ENCODE measurements at regions of chr15 and their contacts with region 1.

Region 1: DNA sequence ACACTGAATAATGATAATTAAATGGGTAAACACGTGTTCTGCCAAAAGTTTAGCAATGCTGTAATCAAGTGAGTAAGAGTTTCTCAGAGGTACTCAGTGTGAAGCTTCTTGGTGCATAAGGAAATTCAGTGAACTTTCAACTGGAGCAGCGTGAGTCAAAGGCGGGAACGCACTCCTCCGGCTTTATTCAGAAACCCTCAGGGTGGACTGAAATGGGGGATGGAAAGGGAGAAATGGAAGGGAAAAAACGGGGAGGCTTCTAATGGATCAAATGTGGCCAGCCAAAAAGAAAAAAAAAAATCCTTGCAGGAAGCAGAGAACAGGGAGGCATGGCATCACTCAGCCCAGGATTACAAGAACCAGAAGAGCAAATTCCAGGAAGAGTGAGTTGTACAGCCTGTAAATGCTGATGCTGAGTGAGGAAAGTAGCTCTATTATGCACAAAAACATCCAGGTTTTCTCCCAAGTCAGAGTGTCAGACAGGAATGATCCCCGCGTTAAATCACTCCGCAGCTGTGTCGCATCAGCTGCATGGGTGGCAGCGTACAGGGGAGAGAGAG is 85.3 kb downstream of the ASB7 start:
- DNase-seq: no peak
- ATAC-seq: peak; percentile 53 to 56
- H3K4me3 ChIP-seq: no peak overlapping the region
- H3K27ac ChIP-seq: peak overlapping the region; percentile 51 to 65 (median 62)
- H3K4me1 ChIP-seq: no peaks in the 10 kb centered on the region
- H3K27me3 ChIP-seq: peaks cover 0 to 3% (median 0%) of the 10 kb centered on the region in 3 donors
- CTCF ChIP-seq: no peak
- POLR2A ChIP-seq: no peak

Region 2: GRCh38 chr15:100721770-100722550 is 34.3 kb after region 1 on chr15:
- in situ Hi-C with region 1: no loop called
- intact Hi-C with region 1: loop called (anchors 5 kb)
- DNase-seq: peak; percentile 63 to 78
- ATAC-seq: peak; percentile 86 to 91
- H3K4me3 ChIP-seq: no peak overlapping the region
- H3K27ac ChIP-seq: peak overlapping the region; percentile 65 to 72 (median 68)
- H3K4me1 ChIP-seq: peaks cover 0 to 9% of the 10 kb centered on the region in 2 donors
- H3K27me3 ChIP-seq: peaks cover 0 to 6% (median 0%) of the 10 kb centered on the region in 3 donors
- CTCF ChIP-seq: no peak
- POLR2A ChIP-seq: no peak

Region 3: DNA sequence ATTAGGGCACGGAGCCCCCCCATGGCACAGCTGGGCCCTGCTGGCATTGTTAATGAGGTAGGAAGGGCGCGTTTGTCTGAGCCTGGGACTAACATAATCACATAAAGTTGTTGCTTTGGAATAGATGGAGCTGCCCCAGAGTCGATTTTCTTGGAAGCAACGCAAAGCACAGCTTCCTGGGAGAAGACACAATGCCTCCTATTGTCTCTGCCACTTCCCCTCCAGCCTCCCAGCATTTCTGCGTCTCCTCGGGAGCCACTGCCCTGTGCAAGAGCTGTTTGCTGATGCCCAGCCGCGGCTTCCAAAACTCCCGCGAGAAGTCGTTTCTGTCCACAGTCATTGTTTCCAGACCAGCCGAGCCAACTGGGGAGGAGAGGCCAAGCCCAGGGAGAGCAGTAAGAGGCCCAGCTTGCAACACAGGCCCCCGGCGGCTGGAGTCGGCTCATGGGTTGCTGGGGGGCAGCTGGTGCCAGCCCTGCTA is 173.9 kb after region 1 on chr15:
- in situ Hi-C with region 1: no loop called
- intact Hi-C with region 1: no loop called
- DNase-seq: peak in 1 of 2 donors; percentile 58
- ATAC-seq: peak in 1 of 2 donors; percentile 53
- H3K4me3 ChIP-seq: no peak overlapping the region
- H3K27ac ChIP-seq: peak overlapping the region in 1 of 4 donors; percentile 16
- H3K4me1 ChIP-seq: no peaks in the 10 kb centered on the region
- H3K27me3 ChIP-seq: peaks cover 7 to 18% (median 14%) of the 10 kb centered on the region in 3 donors
- CTCF ChIP-seq: no peak
- POLR2A ChIP-seq: no peak